ENCODE measurements at regions of chr16 and their contacts with region 1.

Region 1: DNA sequence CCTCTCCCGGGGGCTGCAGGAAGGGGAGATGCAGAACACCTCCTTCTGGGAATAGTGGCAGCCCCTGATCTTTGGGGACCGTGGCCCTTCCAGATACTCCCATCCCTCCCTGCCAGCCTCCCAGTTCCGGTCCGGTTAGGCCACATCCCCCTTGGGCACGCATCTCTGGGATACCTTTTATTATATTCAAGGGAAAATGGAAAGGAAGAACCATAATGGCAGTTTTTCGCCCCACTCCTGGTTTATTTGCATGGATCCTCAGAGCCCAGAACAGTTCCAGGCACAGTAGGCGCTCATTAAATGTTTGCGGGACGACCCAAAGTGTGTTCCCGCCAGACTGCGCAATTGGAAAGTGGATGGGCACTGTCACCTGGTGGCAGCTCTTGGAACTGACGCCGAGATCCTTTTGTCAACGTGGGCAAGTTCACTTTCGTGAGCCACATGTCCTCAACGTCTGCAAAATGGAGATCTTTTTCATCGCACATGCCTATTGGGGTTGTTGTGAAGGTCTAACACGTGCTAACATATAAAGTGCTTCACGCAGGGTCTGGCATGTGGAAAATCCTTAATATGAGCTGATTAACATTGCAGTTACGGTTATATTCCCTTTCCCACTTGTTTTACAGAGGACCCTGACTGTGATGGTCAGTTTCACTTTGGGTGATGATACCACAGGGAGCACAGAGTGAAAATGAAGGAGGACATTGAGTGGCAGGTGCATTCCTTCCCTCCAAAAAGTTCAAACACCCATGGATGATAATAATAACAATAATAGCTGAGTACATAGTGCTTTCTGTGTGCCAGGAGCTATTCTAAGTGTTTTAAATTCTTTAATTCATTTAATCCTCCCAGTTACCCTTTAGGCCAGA is 1.7 kb upstream of the GPRC5B start:
- DNase-seq: peak; percentile 64 to 76
- H3K4me3 ChIP-seq: peak overlapping the region; percentile 28; the same call in 1 of the 2 replicates
- H3K27ac ChIP-seq: no peak overlapping the region
- H3K4me1 ChIP-seq: no peaks in the 10 kb centered on the region
- H3K27me3 ChIP-seq: no peaks in the 10 kb centered on the region
- CTCF ChIP-seq: peak; percentile 99

Region 2: GRCh38 chr16:19555162-19555937 is 331.0 kb before region 1 on chr16 and contains the start of gene VPS35L:
- CTCF ChIA-PET with region 1: interaction called, 15 read pairs
- POLR2A ChIA-PET with region 1: no interaction called
- intact Hi-C with region 1: loop called (anchors 1 kb)
- DNase-seq: peak; percentile 73 to 92
- H3K4me3 ChIP-seq: peak within 1 kb of the TSS; percentile 61
- H3K27ac ChIP-seq: no peak within 1 kb of the TSS
- H3K4me1 ChIP-seq: no peaks in the 10 kb centered on the region; the same call in 1 of the 2 replicates
- H3K27me3 ChIP-seq: no peaks in the 10 kb centered on the region
- CTCF ChIP-seq: peak; percentile 62
- total RNA-seq, gene VPS35L: 11.7 and 12.1 TPM in 2 replicates

Region 3: DNA sequence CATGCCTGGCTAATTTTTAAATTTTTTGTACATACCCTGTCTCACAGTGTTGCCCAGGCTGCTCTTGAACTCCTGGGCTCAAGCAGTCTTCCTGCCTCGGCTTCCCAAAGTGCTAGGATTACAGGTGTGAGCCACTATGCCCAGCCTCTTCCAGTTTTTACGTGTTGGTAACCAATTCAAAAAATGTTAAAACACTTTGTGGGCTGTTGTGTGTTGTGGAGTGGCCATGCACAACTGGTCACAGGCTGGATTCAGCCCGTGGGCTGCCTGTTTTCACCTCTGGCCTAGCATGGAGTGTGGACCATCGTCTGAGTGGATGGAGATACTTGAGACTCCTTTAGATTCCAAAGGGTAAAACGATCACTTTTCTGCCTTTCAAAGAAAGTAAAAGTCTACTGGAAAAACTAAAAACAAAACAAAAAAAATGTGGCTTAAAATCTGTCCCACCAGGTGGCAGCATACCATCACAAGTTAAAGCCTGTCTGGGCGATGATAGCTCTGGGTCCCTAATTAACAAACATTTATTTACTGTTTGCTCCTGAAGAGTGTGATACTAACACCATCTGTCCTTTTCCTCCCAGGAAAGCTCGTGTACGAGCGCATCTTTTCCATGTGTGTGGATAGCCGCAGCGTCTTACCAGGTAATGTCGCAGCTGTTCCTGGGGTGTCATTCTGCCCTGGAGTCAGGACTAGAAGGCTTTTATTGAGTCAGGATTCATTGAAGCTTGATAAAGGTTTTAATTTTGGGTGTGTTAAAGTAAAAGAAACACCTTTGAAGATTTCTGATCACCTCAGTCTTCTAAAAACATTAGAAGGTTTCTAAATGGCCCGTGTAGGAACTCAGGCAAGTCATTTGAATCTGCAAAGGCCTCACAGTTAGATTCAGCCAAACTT is 285.0 kb before region 1 on chr16:
- CTCF ChIA-PET with region 1: interaction called, 8 read pairs
- POLR2A ChIA-PET with region 1: interaction called, 11 read pairs
- intact Hi-C with region 1: loop called (anchors 1 kb)
- DNase-seq: peak; percentile 46 to 53
- H3K4me3 ChIP-seq: no peak overlapping the region
- H3K27ac ChIP-seq: no peak overlapping the region
- H3K4me1 ChIP-seq: peaks cover 29% of the 10 kb centered on the region
- H3K27me3 ChIP-seq: no peaks in the 10 kb centered on the region
- CTCF ChIP-seq: peak; percentile 88

Region 4: GRCh38 chr16:19680881-19681340 is 205.4 kb before region 1 on chr16:
- CTCF ChIA-PET with region 1: interaction called, 13 read pairs
- POLR2A ChIA-PET with region 1: no interaction called
- intact Hi-C with region 1: no loop called
- DNase-seq: peak; percentile 48 to 70
- H3K4me3 ChIP-seq: no peak overlapping the region
- H3K27ac ChIP-seq: no peak overlapping the region
- H3K4me1 ChIP-seq: peaks cover 9% of the 10 kb centered on the region
- H3K27me3 ChIP-seq: no peaks in the 10 kb centered on the region
- CTCF ChIP-seq: 0 out of 2 replicates have a peak, but pooled peaks have one; percentile 23

Region 5: GRCh38 chr16:19717771-19718602 is 168.3 kb before region 1 on chr16 and contains the starts of genes IQCK and KNOP1:
- CTCF ChIA-PET with region 1: interaction called, 15 read pairs
- POLR2A ChIA-PET with region 1: no interaction called
- intact Hi-C with region 1: loop called (anchors 1 kb)
- DNase-seq: peak; percentile 74 to 91
- H3K4me3 ChIP-seq: peak within 1 kb of the TSS; percentile 97
- H3K27ac ChIP-seq: peak within 1 kb of the TSS; percentile 55
- H3K4me1 ChIP-seq: peaks cover 25% of the 10 kb centered on the region
- H3K27me3 ChIP-seq: no peaks in the 10 kb centered on the region
- CTCF ChIP-seq: no peak
- total RNA-seq, gene IQCK: 21.0 and 21.6 TPM in 2 replicates
- total RNA-seq, gene KNOP1: 60.4 TPM in 2 replicates

Region 6: DNA sequence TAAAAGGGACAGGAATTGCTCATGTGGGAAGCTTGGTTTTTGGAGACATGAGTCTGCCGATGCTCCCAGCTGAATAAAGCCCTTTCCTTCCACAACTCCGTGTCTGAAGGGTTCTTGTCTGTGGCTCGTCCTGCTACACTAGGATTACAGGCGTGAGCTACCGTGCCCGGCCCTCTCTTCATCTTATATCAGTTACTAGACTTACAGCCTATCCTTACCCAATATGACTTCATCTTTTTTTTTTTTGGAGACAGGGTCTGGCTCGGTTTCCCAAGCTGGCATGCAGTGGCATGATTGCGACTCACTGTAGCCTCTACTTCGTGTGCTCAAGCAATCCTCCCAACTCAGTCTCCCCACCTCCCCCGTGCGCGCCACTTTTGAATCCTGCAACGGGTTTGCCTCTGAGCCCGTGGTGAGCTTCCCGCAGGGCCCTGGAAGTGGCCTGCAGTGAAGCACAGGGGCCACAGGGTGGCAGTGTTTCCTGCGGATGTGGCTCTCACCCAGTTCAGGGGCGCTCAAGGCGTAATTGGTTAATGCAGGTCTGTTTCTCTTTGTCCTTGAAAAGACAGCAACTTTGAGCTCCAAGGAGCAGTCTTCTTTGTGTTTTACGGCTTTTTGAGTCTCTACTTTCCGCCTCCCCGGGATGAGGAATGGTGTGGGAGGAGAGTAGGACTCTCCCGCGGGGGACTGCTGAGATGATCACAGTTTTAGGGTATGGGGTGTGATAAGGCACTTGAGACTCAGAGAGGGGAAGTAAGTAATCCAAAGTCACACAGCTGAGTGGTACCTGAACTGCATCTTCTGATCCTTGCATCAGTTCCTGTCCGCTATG is 21.1 kb after region 1 on chr16:
- CTCF ChIA-PET with region 1: no interaction called
- POLR2A ChIA-PET with region 1: no interaction called
- intact Hi-C with region 1: no loop called
- DNase-seq: peak; percentile 49 to 73
- H3K4me3 ChIP-seq: no peak overlapping the region
- H3K27ac ChIP-seq: no peak overlapping the region
- H3K4me1 ChIP-seq: no peaks in the 10 kb centered on the region
- H3K27me3 ChIP-seq: peaks cover 34% of the 10 kb centered on the region
- CTCF ChIP-seq: peak; percentile 95

Measured in PC-9 (cell line).